ENCODE measurements at regions of chr5 and their contacts with region 1.

Region 1: DNA sequence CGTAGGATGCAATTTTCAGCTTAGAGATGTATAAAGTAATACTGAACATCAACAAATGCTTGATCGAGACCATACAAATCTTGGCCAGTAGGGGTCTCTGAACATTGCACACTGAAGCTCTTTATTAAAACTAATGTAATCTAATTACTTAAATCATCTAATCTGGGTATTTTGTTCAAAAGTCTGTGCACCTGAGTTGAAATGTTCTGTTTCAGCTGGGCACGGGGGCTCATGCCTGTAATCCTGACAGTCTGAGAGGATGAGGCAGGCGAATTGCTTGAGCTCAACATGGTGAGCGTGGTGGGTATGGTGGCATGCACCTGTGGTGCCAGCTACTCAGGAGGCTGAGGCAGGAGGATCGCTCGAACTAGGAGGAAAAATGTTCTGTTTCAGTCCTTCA is 41.0 kb downstream of the ESM1 start:
- DNase-seq: peak; percentile 15
- ATAC-seq: peak; percentile 78; the same call in 1 of the 2 replicates
- H3K4me3 ChIP-seq: no peak overlapping the region
- H3K27ac ChIP-seq: no peak overlapping the region
- H3K4me1 ChIP-seq: no peaks in the 10 kb centered on the region
- H3K27me3 ChIP-seq: no peaks in the 10 kb centered on the region; the same call in 1 of the 2 replicates
- CTCF ChIP-seq: peak; percentile 81

Region 2: DNA sequence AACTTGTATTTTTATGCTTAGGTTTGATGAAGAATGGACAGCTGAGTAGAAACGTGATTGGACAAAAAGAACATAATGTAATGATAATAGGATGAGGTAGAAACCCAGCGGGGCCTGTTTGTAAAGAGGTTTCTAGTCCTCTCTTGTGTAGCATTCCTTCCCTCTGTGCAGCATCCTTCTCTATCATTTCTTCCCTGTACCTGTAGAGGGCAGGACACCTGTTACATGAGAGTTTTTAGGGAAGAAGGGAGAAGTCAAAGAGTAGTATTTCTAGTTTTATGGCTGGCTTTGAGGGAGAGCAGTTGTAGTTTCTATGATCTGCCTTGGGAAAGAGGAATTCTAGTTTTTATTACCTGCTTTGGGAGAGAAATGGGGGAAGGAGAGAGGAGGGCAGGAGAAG is 1626.1 kb before region 1 on chr5:
- CTCF ChIA-PET with region 1: no interaction called
- POLR2A ChIA-PET with region 1: no interaction called
- in situ Hi-C with region 1: no loop called
- intact Hi-C with region 1: no loop called
- DNase-seq: no peak
- ATAC-seq: no peak
- H3K4me3 ChIP-seq: no peak overlapping the region
- H3K27ac ChIP-seq: no peak overlapping the region
- H3K4me1 ChIP-seq: no peaks in the 10 kb centered on the region
- H3K27me3 ChIP-seq: no peaks in the 10 kb centered on the region
- CTCF ChIP-seq: peak; percentile 12; the same call in 1 of the 2 replicates

Region 3: DNA sequence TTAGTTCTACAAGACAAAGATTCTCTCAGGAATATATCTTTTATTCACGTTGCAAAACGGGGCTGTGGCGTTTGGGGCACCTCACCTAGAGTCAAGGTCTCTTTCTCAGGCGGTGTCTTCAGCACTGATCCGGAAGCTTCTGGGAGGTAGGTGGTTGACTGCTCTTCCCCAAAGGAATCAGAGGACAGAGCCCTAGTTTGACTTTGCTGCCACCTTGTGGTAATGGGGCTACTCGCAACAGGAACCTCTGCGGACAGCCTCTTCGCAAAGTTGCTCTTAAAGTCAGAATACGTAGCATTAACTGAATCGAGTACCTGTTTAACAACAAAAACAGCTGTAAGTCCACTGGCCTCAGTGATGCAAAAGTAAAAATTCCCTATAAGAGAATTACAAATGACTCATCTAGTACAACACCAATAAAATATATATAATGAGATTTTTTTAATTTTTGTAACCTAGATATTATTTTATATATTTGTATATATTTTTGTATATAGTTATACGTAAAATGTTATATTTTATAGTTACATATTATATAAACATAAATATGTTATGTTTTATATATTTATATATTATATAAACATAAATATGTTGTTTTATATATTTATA is 202.3 kb after region 1 on chr5:
- CTCF ChIA-PET with region 1: interaction called, 4 read pairs
- POLR2A ChIA-PET with region 1: no interaction called
- in situ Hi-C with region 1: no loop called
- intact Hi-C with region 1: loop called (anchors 10 kb)
- DNase-seq: peak; percentile 89
- ATAC-seq: peak; percentile 99
- H3K4me3 ChIP-seq: no peak overlapping the region
- H3K27ac ChIP-seq: no peak overlapping the region
- H3K4me1 ChIP-seq: no peaks in the 10 kb centered on the region
- H3K27me3 ChIP-seq: peaks cover 9% of the 10 kb centered on the region
- CTCF ChIP-seq: peak; percentile 95

Region 4: GRCh38 chr5:55159763-55160492 is 215.6 kb after region 1 on chr5 and contains the start of gene GPX8:
- CTCF ChIA-PET with region 1: interaction called, 19 read pairs
- POLR2A ChIA-PET with region 1: interaction called, 5 read pairs
- in situ Hi-C with region 1: no loop called
- intact Hi-C with region 1: no loop called
- DNase-seq: peak; percentile 73
- ATAC-seq: peak; percentile 96
- H3K4me3 ChIP-seq: peak within 1 kb of the TSS; percentile 70 to 82
- H3K27ac ChIP-seq: peak within 1 kb of the TSS; percentile 98
- H3K4me1 ChIP-seq: peaks cover 5% of the 10 kb centered on the region; the same call in 1 of the 2 replicates
- H3K27me3 ChIP-seq: no peaks in the 10 kb centered on the region; the same call in 1 of the 2 replicates
- CTCF ChIP-seq: peak; percentile 75
- total RNA-seq, gene GPX8: 24.8 TPM